Tibial artery (tissue), 4 donors: ENCODE measurements at regions of chr4 and their contacts with region 1.

Region 1: DNA sequence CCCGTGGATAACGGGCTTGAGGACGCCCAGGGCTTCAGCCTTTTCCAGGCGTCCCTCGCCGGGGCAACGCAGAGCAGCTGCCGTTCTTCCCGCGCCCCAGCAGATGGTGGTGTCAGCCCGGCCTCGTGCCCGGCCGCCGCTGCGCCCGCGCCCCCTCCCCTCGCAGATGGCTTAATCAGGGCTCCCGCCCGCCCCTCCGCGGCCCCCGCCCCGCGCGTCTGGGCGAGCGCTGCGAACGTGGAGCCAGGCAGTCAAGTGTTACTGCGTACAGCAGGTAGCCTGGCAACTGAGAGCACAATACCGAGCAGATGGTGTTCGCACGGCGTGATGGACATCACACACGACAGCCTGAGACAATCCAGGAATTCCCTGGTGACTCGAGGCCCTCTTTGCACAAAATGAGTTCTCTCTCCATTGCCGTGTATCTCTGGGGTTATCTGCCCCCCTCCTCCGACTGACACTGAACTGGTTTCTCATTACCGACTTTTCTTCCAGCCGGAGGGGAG is 69.3 kb downstream of the MGST2 start:
- DNase-seq: peak; percentile 84 to 94
- H3K4me3 ChIP-seq: peak overlapping the region; percentile 58 to 72
- H3K27ac ChIP-seq: peak overlapping the region; percentile 84 to 91
- H3K4me1 ChIP-seq: peaks cover 0 to 31% (median 20%) of the 10 kb centered on the region in 4 donors
- H3K27me3 ChIP-seq: no peaks in the 10 kb centered on the region
- CTCF ChIP-seq: peak; percentile 82 to 92

Region 2: GRCh38 chr4:139501927-139502899 is 232.7 kb before region 1 on chr4:
- intact Hi-C with region 1: no loop called
- DNase-seq: no peak
- H3K4me3 ChIP-seq: no peak overlapping the region
- H3K27ac ChIP-seq: no peak overlapping the region
- H3K4me1 ChIP-seq: peaks cover 0 to 4% (median 0%) of the 10 kb centered on the region in 4 donors
- H3K27me3 ChIP-seq: no peaks in the 10 kb centered on the region
- CTCF ChIP-seq: no peak

Region 3: DNA sequence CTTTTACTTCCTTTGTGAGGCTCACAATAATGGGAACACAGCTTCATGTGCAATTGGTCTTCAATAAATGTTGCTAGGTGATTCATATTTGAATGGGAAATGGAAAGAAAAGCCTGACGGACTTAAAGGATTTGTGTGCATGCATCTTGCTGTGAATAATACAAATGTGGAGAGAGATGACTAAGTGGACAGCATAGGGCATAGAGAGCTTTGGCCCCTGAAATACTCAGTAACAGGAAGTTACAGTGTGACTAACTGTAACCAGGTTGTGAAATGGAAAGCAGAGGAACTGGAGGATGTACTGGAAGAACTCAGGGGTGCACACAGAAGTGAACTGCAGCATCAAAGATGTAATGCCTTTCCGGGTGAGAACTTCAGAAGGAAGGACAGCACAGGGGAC is 137.3 kb after region 1 on chr4:
- intact Hi-C with region 1: no loop called
- DNase-seq: no peak
- H3K4me3 ChIP-seq: no peak overlapping the region
- H3K27ac ChIP-seq: no peak overlapping the region
- H3K4me1 ChIP-seq: peaks cover 0 to 13% (median 5%) of the 10 kb centered on the region in 4 donors
- H3K27me3 ChIP-seq: no peaks in the 10 kb centered on the region
- CTCF ChIP-seq: no peak

Region 4: DNA sequence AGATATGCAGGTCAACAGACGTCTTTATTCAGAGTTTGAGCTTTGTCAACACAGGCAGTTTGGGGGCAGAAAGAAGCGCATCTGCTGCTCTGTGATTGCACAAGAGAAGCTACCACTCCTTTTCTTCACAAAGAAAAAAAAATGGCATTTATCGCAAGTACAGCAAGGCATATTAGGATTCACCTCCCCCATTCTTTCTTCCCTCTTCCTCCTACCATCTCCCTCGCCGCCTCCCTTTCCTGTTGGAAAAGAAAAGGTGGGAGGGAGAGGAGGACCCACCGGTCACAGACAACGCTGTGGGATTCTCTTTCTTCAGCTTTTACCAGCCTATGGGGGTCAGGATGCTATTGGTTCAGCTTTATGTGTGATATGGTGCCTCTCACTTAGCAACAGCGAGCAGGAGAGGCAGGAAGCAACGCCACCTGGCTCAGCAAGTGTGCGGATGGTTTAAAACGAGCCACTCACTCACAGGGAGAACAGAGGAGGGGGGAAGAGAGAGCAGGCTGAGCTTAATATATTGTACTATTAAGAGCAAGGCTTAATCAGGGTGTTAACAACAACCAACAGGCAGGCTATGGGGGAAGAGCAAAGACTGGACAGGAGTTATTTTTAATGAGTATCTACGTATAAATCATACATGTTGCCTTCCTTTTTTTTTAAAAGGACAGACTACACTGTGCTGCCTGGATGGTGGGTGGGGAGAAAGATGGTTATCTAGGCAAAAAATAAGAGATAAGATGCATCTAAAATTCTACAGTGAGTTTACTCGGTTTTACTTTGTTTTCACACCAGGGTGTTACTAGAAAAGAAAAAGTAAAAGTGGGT is 314.3 kb after region 1 on chr4:
- intact Hi-C with region 1: loop called (anchors 10 kb)
- DNase-seq: peak in 1 of 2 donors; percentile 24
- H3K4me3 ChIP-seq: peak overlapping the region; percentile 42 to 48
- H3K27ac ChIP-seq: peak overlapping the region; percentile 71
- H3K4me1 ChIP-seq: peaks cover 0 to 45% (median 28%) of the 10 kb centered on the region in 4 donors
- H3K27me3 ChIP-seq: no peaks in the 10 kb centered on the region
- CTCF ChIP-seq: no peak

Region 5: DNA sequence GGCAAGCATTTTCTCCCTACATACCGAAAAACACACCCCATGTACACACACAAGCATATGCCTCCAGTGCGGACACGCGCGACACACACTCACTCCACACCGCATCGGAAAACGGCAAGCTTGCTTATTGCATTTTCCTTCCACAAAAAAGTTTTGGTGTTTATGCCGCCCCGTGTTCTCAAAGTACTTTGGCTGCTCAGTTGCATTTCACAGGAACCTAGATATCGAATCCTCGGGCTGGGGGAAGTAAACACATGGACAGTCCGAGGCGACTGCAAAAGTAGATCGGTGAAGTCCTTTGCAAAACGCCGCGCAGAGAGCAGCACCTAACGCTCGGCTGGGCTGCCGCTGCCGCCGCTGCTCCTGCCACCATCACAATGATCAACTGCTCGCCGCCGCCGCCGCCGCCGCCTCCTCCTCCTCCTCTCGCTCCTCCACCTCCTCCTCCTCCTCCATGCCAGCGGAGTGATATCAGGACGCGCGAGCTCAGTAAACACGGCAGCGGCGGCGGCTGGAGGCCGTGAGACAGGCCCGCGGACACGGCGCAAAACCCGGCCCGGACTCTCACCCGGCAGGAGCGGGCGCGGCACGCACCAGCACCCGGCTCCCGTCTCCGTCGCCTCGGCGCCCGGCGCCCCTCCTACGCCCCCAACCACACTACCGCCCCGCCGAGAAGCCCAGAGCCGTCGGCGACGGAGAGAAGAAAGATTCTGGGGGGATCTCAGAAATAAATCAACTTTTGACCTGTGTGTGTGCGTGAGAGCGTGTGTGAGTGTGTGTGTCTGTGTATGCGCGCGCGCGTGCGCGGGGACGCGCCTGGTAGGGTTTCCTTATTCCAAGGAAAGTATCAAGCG is 419.0 kb after region 1 on chr4 and contains the start of gene MAML3:
- intact Hi-C with region 1: loop called (anchors 2 kb)
- DNase-seq: peak; percentile 95 to 97
- H3K4me3 ChIP-seq: peak within 1 kb of the TSS; percentile 76 to 91
- H3K27ac ChIP-seq: peak within 1 kb of the TSS; percentile 96
- H3K4me1 ChIP-seq: peaks cover 0 to 20% (median 12%) of the 10 kb centered on the region in 4 donors
- H3K27me3 ChIP-seq: no peaks in the 10 kb centered on the region
- CTCF ChIP-seq: peak in 1 of 2 experiments; percentile 19

Region 6: GRCh38 chr4:140308366-140309123 is 573.6 kb after region 1 on chr4:
- intact Hi-C with region 1: loop called (anchors 10 kb)
- DNase-seq: peak; percentile 58 to 94
- H3K4me3 ChIP-seq: peak overlapping the region; percentile 14 to 35
- H3K27ac ChIP-seq: peak overlapping the region; percentile 70 to 71
- H3K4me1 ChIP-seq: peaks cover 0 to 43% (median 17%) of the 10 kb centered on the region in 4 donors
- H3K27me3 ChIP-seq: no peaks in the 10 kb centered on the region
- CTCF ChIP-seq: no peak